Psoas muscle (tissue), 8 donors: ENCODE measurements at regions of chr2 and their contacts with region 1.

Region 1: DNA sequence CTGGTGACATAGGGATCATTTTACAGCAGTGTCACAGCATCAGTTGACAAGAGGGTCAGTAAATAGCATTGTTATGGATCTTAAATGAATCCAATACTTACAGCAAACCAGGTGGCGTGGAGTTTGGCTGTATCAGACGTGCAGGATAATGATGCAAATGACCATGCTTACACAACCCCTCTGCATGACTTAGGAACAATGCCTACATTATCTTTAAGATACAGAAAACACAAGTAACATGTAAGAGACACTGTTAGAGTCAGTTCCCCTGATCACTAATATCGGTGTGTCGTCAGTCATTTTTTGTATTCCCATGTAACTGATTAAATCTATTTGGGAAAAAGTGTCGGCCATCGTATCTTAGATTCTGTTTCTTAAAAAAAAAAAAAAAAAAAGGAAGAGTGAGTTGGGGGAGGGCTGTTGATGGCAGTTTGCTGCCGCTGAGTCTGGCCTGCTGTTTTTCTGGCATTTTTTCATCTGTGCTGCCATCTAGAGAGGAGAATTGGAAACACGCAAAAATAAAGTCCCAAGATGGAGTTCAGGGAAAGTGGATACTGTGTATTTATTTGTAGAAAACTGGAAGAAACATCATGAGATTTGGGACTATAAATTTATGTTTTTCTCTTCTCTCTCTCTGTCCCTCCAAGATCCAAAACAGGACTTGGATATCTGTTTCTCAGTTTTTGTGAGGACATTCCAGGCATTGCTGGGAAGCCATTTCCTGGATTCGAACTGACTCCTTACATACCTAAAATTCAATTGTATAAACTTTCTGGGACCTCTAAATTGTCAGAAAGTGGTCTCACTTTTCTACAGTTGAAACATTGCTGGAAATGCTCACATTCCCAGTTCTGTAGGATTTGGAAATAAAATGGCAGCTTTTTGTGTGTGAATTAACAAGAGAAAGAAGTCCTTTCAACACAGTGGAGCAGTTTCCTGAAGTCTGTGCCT is 60.3 kb upstream of the AGPS start:
- DNase-seq: peak in 1 of 2 donors; percentile 54
- ATAC-seq: peak; percentile 77 to 91 (median 86)
- H3K4me3 ChIP-seq: peak overlapping the region; percentile 21
- H3K27ac ChIP-seq: peak overlapping the region; percentile 10
- H3K4me1 ChIP-seq: peaks cover 6% of the 10 kb centered on the region
- H3K27me3 ChIP-seq: no peaks in the 10 kb centered on the region
- CTCF ChIP-seq: peak; percentile 67

Region 2: GRCh38 chr2:177263451-177264208 is 68.7 kb before region 1 on chr2:
- intact Hi-C with region 1: loop called (anchors 2 to 5 kb)
- DNase-seq: peak; percentile 99 to 100
- ATAC-seq: peak; percentile 82 to 84 (median 83)
- H3K4me3 ChIP-seq: peak overlapping the region; percentile 86
- H3K27ac ChIP-seq: peak overlapping the region; percentile 99
- H3K4me1 ChIP-seq: peaks cover 44% of the 10 kb centered on the region
- H3K27me3 ChIP-seq: no peaks in the 10 kb centered on the region
- CTCF ChIP-seq: peak; percentile 88

Region 3: DNA sequence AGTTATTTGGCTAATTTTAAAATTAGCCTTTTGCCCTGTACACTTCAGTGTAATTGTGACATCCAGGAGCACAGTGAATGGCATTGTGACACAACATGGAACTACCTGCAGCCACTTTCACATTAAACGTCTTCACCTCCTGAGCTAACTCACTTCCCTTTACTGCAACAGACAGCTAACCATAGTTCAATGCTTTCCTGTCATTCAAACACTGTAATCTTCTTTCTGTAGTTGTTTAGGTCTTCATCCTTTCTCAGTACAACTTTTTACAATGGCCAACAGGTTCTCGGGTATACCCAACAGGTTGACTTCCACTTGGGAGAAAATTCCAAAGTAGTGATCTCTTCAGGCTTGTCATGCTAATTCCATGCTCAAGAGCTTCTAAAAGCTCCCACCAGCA is 51.6 kb after region 1 on chr2:
- intact Hi-C with region 1: loop called in 1 of 2 experiments (anchors 10 kb)
- DNase-seq: no peak
- ATAC-seq: no peak
- H3K4me3 ChIP-seq: no peak overlapping the region
- H3K27ac ChIP-seq: no peak overlapping the region
- H3K4me1 ChIP-seq: peaks cover 5% of the 10 kb centered on the region
- H3K27me3 ChIP-seq: no peaks in the 10 kb centered on the region
- CTCF ChIP-seq: no peak

Region 4: DNA sequence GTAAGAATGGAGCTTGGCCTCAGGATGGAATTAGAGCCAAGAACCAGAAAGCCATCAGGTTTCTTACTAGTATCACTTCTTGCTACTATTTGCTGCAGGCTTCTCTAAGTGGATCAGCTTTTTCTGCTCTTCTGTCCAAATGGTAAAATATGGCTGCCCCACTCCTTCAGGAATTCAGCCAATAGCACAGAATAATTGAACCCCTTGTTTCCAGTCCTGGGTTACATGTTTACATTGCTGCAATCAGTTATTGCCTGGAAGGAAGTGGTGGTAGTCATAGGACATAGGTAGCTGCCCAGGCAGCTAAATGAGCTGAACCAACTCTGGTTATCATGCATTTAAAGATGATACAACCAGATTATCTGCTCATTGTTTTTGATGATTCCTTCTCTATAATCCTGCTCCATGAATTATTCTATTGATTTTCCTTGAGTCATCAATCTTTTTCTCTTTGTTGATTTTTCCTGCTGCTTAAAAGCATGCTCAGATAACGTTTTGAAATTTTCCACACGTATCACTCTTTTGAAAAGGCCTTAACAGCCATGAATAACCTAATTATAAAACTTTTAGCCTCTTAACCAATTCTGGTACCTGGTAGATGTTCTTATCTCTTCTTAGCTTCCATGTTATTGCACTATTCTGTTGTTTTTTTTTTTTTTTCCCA is 72.8 kb after region 1 on chr2:
- intact Hi-C with region 1: no loop called
- DNase-seq: no peak
- ATAC-seq: no peak
- H3K4me3 ChIP-seq: no peak overlapping the region
- H3K27ac ChIP-seq: no peak overlapping the region
- H3K4me1 ChIP-seq: peaks cover 33% of the 10 kb centered on the region
- H3K27me3 ChIP-seq: no peaks in the 10 kb centered on the region
- CTCF ChIP-seq: no peak

Region 5: DNA sequence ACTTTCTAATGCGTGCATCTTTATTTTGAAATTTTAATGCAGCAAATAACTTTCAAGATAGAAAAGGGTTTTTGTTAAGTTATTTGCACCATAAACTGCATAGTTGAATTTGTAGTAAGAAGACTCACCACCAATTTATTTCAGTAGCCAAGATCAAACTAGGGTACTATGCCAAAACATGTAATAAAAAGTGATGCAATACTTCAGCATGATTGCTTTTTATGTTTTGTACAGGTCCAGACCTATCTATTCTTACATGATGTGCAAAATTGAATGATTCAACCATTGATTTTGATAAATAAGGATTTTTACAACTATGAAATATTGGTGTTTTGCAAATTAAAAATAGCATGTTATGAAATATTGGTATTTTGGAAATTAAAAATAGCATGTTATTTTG is 87.0 kb after region 1 on chr2:
- intact Hi-C with region 1: loop called (anchors 1 to 2 kb)
- DNase-seq: no peak
- ATAC-seq: peak in 2 of 4 donors; percentile 59 to 73
- H3K4me3 ChIP-seq: no peak overlapping the region
- H3K27ac ChIP-seq: no peak overlapping the region
- H3K4me1 ChIP-seq: peaks cover 28% of the 10 kb centered on the region
- H3K27me3 ChIP-seq: no peaks in the 10 kb centered on the region
- CTCF ChIP-seq: no peak

Region 6: GRCh38 chr2:177604271-177605065 is 272.2 kb after region 1 on chr2:
- intact Hi-C with region 1: loop called (anchors 5 to 10 kb)
- DNase-seq: no peak
- ATAC-seq: peak in 3 of 4 donors; percentile 37 to 58 (median 57)
- H3K4me3 ChIP-seq: no peak overlapping the region
- H3K27ac ChIP-seq: no peak overlapping the region
- H3K4me1 ChIP-seq: no peaks in the 10 kb centered on the region
- H3K27me3 ChIP-seq: no peaks in the 10 kb centered on the region
- CTCF ChIP-seq: peak; percentile 59

Region 7: GRCh38 chr2:177724398-177725287 is 392.3 kb after region 1 on chr2:
- intact Hi-C with region 1: loop called (anchors 1 to 5 kb)
- DNase-seq: peak; percentile 28 to 54
- ATAC-seq: peak; percentile 63 to 87 (median 76)
- H3K4me3 ChIP-seq: no peak overlapping the region
- H3K27ac ChIP-seq: no peak overlapping the region
- H3K4me1 ChIP-seq: peaks cover 4% of the 10 kb centered on the region
- H3K27me3 ChIP-seq: no peaks in the 10 kb centered on the region
- CTCF ChIP-seq: peak; percentile 84

Region 8: GRCh38 chr2:177763532-177764265 is 431.4 kb after region 1 on chr2:
- intact Hi-C with region 1: loop called (anchors 2 to 10 kb)
- DNase-seq: peak; percentile 68 to 82
- ATAC-seq: peak; percentile 52 to 98 (median 91)
- H3K4me3 ChIP-seq: no peak overlapping the region
- H3K27ac ChIP-seq: no peak overlapping the region
- H3K4me1 ChIP-seq: no peaks in the 10 kb centered on the region
- H3K27me3 ChIP-seq: no peaks in the 10 kb centered on the region
- CTCF ChIP-seq: peak; percentile 72